GM12878 (cell line): ENCODE measurements at regions of chr11 and their contacts with region 1.

Region 1: GRCh38 chr11:43282607-43283440 is 29.0 kb upstream of the API5 start:
- DNase-seq: no peak
- ATAC-seq: peak; percentile 89
- H3K4me3 ChIP-seq: no peak overlapping the region
- H3K27ac ChIP-seq: no peak overlapping the region
- H3K4me1 ChIP-seq: no peaks in the 10 kb centered on the region
- H3K27me3 ChIP-seq: no peaks in the 10 kb centered on the region; a peak in 1 of 4 replicates
- CTCF ChIP-seq: peak; percentile 79 to 84 (median 84)
- EP300 ChIP-seq: no peak
- POLR2A ChIP-seq: no peak
- RAD21 ChIP-seq: peak; percentile 78

Region 2: GRCh38 chr11:41461057-41461681 is 1821.7 kb before region 1 on chr11:
- CTCF ChIA-PET with region 1: interaction called, 13 read pairs
- POLR2A ChIA-PET with region 1: no interaction called
- RAD21 ChIA-PET with region 1: no interaction called
- SMC1A ChIA-PET with region 1: interaction called, 5 read pairs
- in situ Hi-C with region 1: loop called (anchors 5 kb)
- intact Hi-C with region 1: loop called (anchors 2 kb)
- DNase-seq: no peak
- ATAC-seq: no peak
- H3K4me3 ChIP-seq: no peak overlapping the region
- H3K27ac ChIP-seq: no peak overlapping the region
- H3K4me1 ChIP-seq: no peaks in the 10 kb centered on the region
- H3K27me3 ChIP-seq: peaks cover 0 to 2% of the 10 kb centered on the region in 2 experiments; a peak in 1 of 4 replicates
- CTCF ChIP-seq: peak; percentile 47 to 62 (median 59)
- EP300 ChIP-seq: no peak
- POLR2A ChIP-seq: no peak
- RAD21 ChIP-seq: peak; percentile 47

Region 3: GRCh38 chr11:42770444-42771065 is 512.3 kb before region 1 on chr11:
- CTCF ChIA-PET with region 1: interaction called, 40 read pairs
- POLR2A ChIA-PET with region 1: no interaction called
- RAD21 ChIA-PET with region 1: interaction called, 12 read pairs
- SMC1A ChIA-PET with region 1: interaction called, 6 read pairs
- in situ Hi-C with region 1: loop called (anchors 5 kb)
- intact Hi-C with region 1: loop called (anchors 1 kb)
- DNase-seq: no peak
- ATAC-seq: peak; percentile 90
- H3K4me3 ChIP-seq: no peak overlapping the region
- H3K27ac ChIP-seq: no peak overlapping the region
- H3K4me1 ChIP-seq: no peaks in the 10 kb centered on the region
- H3K27me3 ChIP-seq: no peaks in the 10 kb centered on the region
- CTCF ChIP-seq: peak; percentile 69 to 77 (median 72)
- EP300 ChIP-seq: no peak
- POLR2A ChIP-seq: no peak
- RAD21 ChIP-seq: peak; percentile 77

Region 4: DNA sequence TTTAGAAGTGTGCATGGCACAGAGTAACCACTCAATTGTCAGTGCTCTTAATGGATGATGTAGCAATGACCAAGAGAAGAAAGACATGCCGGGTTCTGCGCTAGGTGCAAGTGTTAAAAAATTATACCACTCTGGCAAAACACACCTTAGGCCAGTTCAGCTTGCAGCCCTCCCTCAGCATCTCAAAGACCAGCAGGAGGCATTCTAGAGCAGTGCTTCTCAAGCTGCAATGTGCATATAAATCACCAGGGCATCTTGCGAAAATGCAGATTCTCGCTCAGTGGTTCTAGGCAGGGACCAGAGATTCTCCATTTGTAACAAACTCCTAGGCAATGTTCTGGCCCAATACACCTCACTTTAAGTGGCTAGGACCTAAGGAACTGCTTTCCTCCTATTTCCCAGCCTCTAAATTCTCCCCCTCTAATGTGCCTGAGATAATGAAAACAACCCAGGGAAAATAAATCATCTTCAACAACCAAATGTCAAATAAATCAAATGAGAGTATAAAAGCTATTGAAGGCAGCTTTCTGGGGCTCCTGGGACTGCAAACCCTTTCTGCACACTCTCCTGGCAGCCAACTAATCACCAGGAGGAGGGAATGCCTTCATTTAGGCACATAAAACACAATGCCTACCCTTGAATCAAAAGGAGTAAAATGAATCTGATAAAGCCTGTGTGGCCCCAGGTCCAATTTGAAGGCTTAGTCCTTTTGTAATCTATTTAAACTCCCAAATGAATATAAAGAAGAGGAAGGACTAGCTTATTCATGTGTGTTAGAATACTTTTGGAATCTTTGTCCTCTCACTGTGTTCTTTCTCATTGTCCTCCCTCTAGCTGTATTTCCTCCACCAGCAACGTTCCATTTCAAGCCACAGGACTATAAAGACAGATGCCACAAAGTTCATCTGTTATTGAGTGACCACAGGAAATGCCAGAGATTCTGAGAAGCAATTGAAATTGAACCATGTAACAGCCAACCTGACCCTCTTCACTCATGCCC is 308.0 kb before region 1 on chr11:
- CTCF ChIA-PET with region 1: interaction called, 5 read pairs
- POLR2A ChIA-PET with region 1: no interaction called
- RAD21 ChIA-PET with region 1: no interaction called
- SMC1A ChIA-PET with region 1: interaction called, 3 read pairs
- in situ Hi-C with region 1: no loop called
- intact Hi-C with region 1: loop called (anchors 5 kb)
- DNase-seq: no peak
- ATAC-seq: no peak
- H3K4me3 ChIP-seq: no peak overlapping the region
- H3K27ac ChIP-seq: no peak overlapping the region
- H3K4me1 ChIP-seq: no peaks in the 10 kb centered on the region
- H3K27me3 ChIP-seq: no peaks in the 10 kb centered on the region
- CTCF ChIP-seq: 0 out of 6 replicates have a peak, but pooled peaks of 1 of the 3 experiments have one; percentile 6
- EP300 ChIP-seq: no peak
- POLR2A ChIP-seq: no peak
- RAD21 ChIP-seq: 0 out of 2 replicates have a peak, but pooled peaks have one; percentile 33

Region 5: GRCh38 chr11:43298397-43298796 is 15.6 kb after region 1 on chr11:
- CTCF ChIA-PET with region 1: interaction called, 31 read pairs
- POLR2A ChIA-PET with region 1: no interaction called
- RAD21 ChIA-PET with region 1: interaction called, 4 read pairs
- SMC1A ChIA-PET with region 1: interaction called, 3 read pairs
- in situ Hi-C with region 1: no loop called
- intact Hi-C with region 1: no loop called
- DNase-seq: no peak
- ATAC-seq: peak; percentile 48; the same call in 2 of the 3 replicates
- H3K4me3 ChIP-seq: no peak overlapping the region
- H3K27ac ChIP-seq: no peak overlapping the region
- H3K4me1 ChIP-seq: no peaks in the 10 kb centered on the region; the same call in 1 of the 2 replicates
- H3K27me3 ChIP-seq: no peaks in the 10 kb centered on the region
- CTCF ChIP-seq: no peak
- EP300 ChIP-seq: no peak
- POLR2A ChIP-seq: no peak
- RAD21 ChIP-seq: no peak